ENCODE measurements at regions of chr2 and their contacts with region 1.

Region 1: DNA sequence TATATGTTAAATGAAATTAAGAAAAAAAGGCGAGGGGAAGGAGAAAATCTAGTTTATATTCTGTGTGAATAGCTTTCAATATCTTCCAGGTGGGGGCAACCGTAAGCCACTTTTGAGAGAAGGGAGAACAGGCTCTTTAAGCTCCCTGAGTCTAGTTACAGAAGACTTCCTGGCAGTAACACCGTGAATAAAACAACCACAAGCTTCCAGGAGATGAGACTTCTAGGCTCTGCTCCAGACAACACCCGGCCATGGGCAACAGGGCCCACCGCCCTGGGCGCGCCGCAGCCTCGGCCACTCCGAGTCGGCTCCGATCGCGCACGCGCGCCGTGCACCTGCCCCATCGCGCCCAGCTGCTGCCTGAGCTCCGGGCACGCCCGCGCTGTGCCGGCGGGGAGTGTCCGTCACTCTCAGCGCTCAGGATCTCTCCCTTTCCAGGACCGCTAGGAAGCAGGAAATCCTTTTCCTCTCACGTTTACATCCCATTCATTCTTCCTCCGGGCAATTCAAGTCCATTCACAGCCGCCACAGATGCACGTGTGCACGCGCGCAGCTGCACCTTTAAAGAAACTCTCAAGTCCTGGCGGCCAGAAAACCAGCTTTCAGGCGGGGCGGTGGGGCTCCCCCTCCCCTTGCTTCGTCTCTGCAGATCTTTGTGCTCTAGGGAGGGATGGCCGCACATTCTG is 19.4 kb upstream of the PAX3 start:
- DNase-seq: peak; percentile 80
- CTCF ChIP-seq: peak; percentile 51

Region 2: GRCh38 chr2:222057347-222058073 is 260.7 kb before region 1 on chr2:
- in situ Hi-C with region 1: loop called (anchors 10 kb)
- DNase-seq: peak; percentile 58
- CTCF ChIP-seq: peak; percentile 35

Region 3: DNA sequence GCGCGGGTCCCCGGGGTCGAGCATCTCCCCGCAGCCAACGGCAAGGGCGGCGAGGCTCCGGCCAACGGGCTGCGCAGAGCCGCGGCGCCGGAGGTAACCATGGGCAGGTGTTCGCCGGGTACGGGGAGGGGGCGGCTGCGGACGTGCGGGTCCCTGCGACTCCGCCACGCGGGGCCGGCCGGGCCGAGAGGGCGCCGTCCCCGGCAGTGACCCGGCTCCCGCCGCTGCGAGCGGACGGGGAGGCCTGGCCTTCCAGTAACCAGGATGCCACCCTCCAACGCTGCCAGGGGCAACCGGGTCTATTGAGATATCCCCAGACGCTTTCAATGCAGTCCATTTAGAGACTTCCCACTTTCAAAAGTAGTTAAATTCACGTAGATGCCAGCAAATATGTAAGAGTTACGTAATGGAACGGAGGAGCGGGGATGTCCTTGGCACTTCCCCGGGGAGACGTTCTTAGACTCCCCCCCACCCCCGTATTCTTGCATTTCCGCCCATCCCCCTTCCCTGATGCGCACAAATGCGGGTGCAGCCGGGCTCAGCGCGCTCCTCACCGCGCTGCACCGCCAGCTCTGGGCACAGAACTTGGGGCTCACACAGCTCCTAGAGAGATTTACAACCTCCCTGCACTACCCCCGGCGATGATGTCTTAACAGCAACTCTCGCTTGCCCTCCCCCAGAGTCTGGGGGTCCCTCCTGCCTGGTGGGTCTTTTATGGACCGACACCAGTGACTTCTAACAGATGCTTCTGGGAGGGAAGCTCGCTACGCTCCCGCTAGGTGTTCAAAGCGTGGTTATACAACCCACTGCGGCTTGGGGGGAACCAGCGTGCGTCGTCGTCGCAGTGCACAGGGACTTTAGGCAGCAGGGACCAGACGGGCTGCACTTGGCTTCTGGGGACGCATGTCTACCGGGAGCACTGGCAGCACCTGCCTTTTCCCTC is 106.8 kb after region 1 on chr2:
- in situ Hi-C with region 1: loop called (anchors 10 kb)
- DNase-seq: peak; percentile 60
- CTCF ChIP-seq: no peak

Region 4: DNA sequence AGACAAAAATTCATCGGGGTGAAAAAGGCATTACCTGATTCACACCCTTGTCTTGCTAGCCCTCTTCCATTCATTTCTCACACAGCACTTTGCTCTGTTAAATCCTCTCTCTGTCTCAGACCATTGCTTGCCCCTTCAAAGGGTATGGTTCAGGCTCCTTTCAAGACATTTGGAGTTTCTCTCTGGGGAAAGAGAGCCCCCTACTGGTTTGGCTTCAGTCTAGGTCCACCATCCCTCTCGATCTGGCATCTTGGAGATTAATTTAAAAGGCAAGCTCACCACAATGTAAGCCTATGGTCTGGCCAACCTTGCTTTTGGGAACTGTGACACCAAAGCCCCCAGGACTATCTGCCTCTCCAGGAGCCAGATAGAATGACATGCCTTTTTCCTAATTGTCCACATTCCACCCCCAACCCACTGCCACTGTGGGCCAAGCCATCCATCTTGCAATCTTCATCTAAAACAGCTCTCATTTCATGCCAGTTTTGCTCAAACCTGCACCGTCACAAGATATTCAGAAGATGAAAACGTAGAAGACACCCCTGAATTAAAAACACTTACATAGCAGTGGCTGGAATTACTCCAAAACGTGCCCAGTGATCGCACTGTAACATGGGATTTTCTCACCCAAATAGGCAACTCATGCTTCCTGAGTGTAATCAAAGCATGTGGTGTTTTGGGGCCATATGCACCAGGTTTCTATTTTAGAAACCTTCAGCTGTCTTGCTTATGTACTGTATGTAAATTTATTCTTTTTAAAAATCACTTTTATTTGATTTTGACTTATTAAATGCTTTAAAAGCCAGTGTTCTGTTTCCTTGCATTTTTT is 243.9 kb after region 1 on chr2:
- in situ Hi-C with region 1: loop called (anchors 5 kb)
- DNase-seq: peak; percentile 77
- CTCF ChIP-seq: peak; percentile 59